ENCODE measurements at regions of chr19 and their contacts with region 1.

Region 1: GRCh38 chr19:41353466-41354342 is at the start of gene TGFB1:
- DNase-seq: peak; percentile 89 to 94 (median 92)
- ATAC-seq: peak; percentile 85
- H3K4me3 ChIP-seq: peak within 1 kb of the TSS; percentile 94
- H3K4me3 Mint-ChIP-seq: peak within 1 kb of the TSS; percentile 92 to 100 (median 98)
- H3K27ac ChIP-seq: peak within 1 kb of the TSS; percentile 96
- H3K27ac Mint-ChIP-seq: peak within 1 kb of the TSS; percentile 94 to 100 (median 98)
- H3K4me1 ChIP-seq: peaks cover 44 to 70% of the 10 kb centered on the region in 2 donors
- H3K4me1 Mint-ChIP-seq: peaks cover 56 to 71% (median 59%) of the 10 kb centered on the region in 7 donors
- H3K27me3 ChIP-seq: no peaks in the 10 kb centered on the region
- H3K27me3 Mint-ChIP-seq: no peaks in the 10 kb centered on the region
- total RNA-seq, gene TGFB1: 91.2 to 322 (median 185) TPM

Region 2: GRCh38 chr19:39833464-39834286 is 1520.0 kb before region 1 on chr19 and contains the start of gene DYRK1B:
- CTCF ChIA-PET with region 1: no interaction called
- POLR2A ChIA-PET with region 1: no interaction called
- intact Hi-C with region 1: loop called in 1 of 2 experiments (anchors 5 kb)
- DNase-seq: peak; percentile 90 to 99 (median 98)
- ATAC-seq: peak; percentile 92
- H3K4me3 ChIP-seq: peak within 1 kb of the TSS; percentile 100
- H3K4me3 Mint-ChIP-seq: peak within 1 kb of the TSS; percentile 60 to 88 (median 81)
- H3K27ac ChIP-seq: peak within 1 kb of the TSS; percentile 96
- H3K27ac Mint-ChIP-seq: peak within 1 kb of the TSS; percentile 85 to 96 (median 92)
- H3K4me1 ChIP-seq: peaks cover 17 to 23% of the 10 kb centered on the region in 2 donors
- H3K4me1 Mint-ChIP-seq: peaks cover 19 to 37% (median 27%) of the 10 kb centered on the region in 7 donors
- H3K27me3 ChIP-seq: no peaks in the 10 kb centered on the region
- H3K27me3 Mint-ChIP-seq: no peaks in the 10 kb centered on the region
- total RNA-seq, gene DYRK1B: 12.3 to 38.9 (median 23.5) TPM

Region 3: GRCh38 chr19:39996811-39997594 is 1356.7 kb before region 1 on chr19 and contains the start of gene ZNF546:
- CTCF ChIA-PET with region 1: no interaction called
- POLR2A ChIA-PET with region 1: no interaction called
- intact Hi-C with region 1: no loop called
- DNase-seq: peak; percentile 67 to 91 (median 90)
- ATAC-seq: peak; percentile 96
- H3K4me3 ChIP-seq: peak within 1 kb of the TSS; percentile 91
- H3K4me3 Mint-ChIP-seq: peak within 1 kb of the TSS; percentile 87 to 100 (median 95)
- H3K27ac ChIP-seq: peak within 1 kb of the TSS; percentile 85
- H3K27ac Mint-ChIP-seq: peak within 1 kb of the TSS; percentile 84 to 100 (median 95)
- H3K4me1 ChIP-seq: peaks cover 10 to 13% of the 10 kb centered on the region in 2 donors
- H3K4me1 Mint-ChIP-seq: peaks cover 20 to 56% (median 41%) of the 10 kb centered on the region in 7 donors
- H3K27me3 ChIP-seq: no peaks in the 10 kb centered on the region
- H3K27me3 Mint-ChIP-seq: no peaks in the 10 kb centered on the region
- total RNA-seq, gene ZNF546: 4.7 to 24.8 (median 7.5) TPM

Region 4: DNA sequence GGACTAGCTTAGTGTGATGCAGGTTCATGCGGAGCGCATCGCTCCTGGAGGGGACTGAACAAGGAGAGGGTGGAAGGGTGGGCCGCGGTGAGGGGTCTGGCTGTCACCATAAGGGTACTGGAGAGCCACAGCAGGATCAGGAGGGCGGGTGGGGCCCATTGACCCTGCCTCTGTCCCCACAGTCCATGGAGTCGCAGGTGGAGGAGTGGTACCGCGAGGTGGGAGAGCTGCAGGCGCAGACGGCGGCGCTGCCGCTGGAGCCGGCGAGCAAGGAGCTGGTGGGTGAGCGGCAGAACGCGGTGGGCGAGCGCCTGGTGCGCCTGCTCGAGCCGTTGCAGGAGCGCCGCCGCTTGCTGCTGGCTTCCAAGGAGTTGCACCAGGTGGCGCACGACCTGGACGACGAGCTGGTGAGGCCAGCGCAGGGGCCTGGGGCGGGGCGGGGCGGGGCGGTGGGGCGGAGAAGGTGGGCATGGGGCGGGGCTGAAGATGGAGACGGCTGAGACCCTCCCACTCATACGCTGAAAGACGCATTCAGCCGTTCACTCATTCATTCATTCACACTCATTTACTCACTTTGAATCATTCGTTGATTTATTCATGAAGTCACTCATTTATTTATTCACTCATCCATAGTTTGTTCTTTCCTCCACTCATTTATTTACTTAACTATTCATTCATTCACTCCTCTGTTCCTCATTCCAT is 804.5 kb before region 1 on chr19:
- CTCF ChIA-PET with region 1: no interaction called
- POLR2A ChIA-PET with region 1: no interaction called
- intact Hi-C with region 1: no loop called
- DNase-seq: peak; percentile 26 to 74 (median 57)
- ATAC-seq: peak; percentile 95
- H3K4me3 ChIP-seq: no peak overlapping the region
- H3K4me3 Mint-ChIP-seq: peak overlapping the region in 8 of 10 donors; percentile 13 to 73 (median 54)
- H3K27ac ChIP-seq: no peak overlapping the region
- H3K27ac Mint-ChIP-seq: no peak overlapping the region
- H3K4me1 ChIP-seq: peaks cover 0 to 5% of the 10 kb centered on the region in 2 donors
- H3K4me1 Mint-ChIP-seq: peaks cover 0 to 14% (median 12%) of the 10 kb centered on the region in 7 donors
- H3K27me3 ChIP-seq: peaks cover 0 to 10% of the 10 kb centered on the region in 2 donors
- H3K27me3 Mint-ChIP-seq: peaks cover 38 to 60% (median 52%) of the 10 kb centered on the region in 5 donors

Region 5: DNA sequence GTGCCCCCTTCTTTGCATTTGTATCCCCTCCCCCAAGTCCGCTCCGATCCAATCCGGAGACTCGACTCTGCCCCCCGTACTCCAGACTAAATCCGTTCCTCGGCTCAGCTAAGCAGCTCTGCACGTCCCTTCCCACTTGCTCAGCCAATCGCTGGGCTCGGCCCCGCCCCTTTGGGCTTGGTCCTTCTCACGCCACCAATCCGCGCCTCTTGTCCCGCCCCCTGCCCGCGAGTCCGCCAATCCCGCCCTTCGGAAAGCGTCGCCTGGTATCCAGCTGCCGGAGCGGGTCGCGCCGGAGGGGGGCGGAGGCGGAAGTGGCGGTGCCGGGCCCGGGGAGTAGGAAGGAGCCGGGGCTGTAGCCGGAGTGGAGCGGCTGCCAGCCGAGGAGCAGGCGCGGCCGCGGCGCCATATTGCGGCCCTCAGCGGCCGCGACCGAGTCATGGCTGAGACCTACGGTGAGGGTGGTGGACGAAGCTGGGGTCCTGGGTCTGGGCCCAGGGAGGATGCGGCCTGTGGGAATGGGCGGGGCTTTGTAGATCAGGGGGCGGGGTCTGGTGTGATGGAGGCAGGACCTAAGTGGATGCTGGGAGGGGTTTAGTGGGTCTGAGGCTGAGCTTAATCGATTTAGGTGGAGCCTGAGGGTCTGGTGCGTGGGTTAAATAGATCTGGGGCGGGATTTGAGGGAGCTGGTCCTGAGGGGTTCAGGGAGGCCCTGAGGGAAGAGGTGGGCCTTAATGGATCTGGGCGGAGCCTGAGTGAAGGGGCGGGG is 575.6 kb before region 1 on chr19 and contains the start of gene RAB4B:
- CTCF ChIA-PET with region 1: interaction called, 4 read pairs
- POLR2A ChIA-PET with region 1: no interaction called
- intact Hi-C with region 1: loop called in 1 of 2 experiments (anchors 10 kb)
- DNase-seq: peak; percentile 99 to 100 (median 100)
- ATAC-seq: peak; percentile 92
- H3K4me3 ChIP-seq: peak within 1 kb of the TSS; percentile 97
- H3K4me3 Mint-ChIP-seq: peak within 1 kb of the TSS; percentile 91 to 99 (median 96)
- H3K27ac ChIP-seq: peak within 1 kb of the TSS; percentile 92
- H3K27ac Mint-ChIP-seq: peak within 1 kb of the TSS; percentile 87 to 99 (median 98)
- H3K4me1 ChIP-seq: peaks cover 18 to 24% of the 10 kb centered on the region in 2 donors
- H3K4me1 Mint-ChIP-seq: peaks cover 31 to 49% (median 39%) of the 10 kb centered on the region in 7 donors
- H3K27me3 ChIP-seq: no peaks in the 10 kb centered on the region
- H3K27me3 Mint-ChIP-seq: no peaks in the 10 kb centered on the region
- total RNA-seq, gene RAB4B: 37.6 to 63.0 (median 52.5) TPM

Region 6: DNA sequence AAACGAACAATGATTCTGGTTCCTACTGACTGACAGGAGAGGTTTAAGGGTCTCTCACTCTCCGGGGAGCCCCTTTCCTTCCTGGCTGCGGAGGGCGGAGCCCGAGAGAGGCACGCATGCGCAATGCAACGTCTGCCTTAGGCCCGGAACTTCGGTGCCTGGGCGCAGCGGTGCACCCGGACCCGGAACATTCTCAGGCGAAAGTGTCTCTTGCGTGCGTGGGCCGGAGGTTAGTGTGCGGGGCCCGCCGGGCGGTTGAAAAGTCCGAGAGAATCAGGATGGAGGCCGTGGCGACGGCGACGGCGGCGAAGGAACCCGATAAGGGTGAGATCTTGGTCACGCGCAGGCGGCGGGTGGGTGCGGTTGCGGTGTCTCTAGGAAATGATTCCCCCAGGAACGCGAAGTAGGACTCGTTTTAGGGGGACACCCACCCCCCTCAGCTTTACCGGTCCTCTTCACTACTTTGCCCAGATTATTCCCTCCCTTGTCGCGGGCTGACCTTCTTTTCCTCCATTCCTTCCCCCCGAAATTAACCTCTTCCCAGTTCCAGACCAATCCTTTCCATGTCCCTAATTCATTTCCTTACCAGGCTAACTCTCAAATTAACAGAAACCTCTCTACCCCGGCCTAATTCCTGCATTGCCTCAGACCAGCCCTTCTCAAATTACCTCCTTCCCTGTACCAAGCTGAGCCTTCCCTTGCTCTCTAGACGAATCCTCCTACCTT is 43.5 kb before region 1 on chr19 and contains the start of gene CCDC97:
- CTCF ChIA-PET with region 1: interaction called, 21 read pairs
- POLR2A ChIA-PET with region 1: interaction called, 110 read pairs
- intact Hi-C with region 1: loop called (anchors 1 kb)
- DNase-seq: peak; percentile 85 to 94 (median 91)
- ATAC-seq: peak; percentile 72
- H3K4me3 ChIP-seq: peak within 1 kb of the TSS; percentile 72
- H3K4me3 Mint-ChIP-seq: peak within 1 kb of the TSS; percentile 93 to 100 (median 96)
- H3K27ac ChIP-seq: peak within 1 kb of the TSS; percentile 87
- H3K27ac Mint-ChIP-seq: peak within 1 kb of the TSS; percentile 94 to 99 (median 98)
- H3K4me1 ChIP-seq: peaks cover 51 to 60% of the 10 kb centered on the region in 2 donors
- H3K4me1 Mint-ChIP-seq: peaks cover 52 to 90% (median 69%) of the 10 kb centered on the region in 7 donors
- H3K27me3 ChIP-seq: no peaks in the 10 kb centered on the region
- H3K27me3 Mint-ChIP-seq: peaks cover 0 to 3% (median 0%) of the 10 kb centered on the region in 5 donors
- total RNA-seq, gene CCDC97: 35.9 to 56.5 (median 49.1) TPM

Region 7: GRCh38 chr19:41363753-41364523 is 10.2 kb after region 1 on chr19 and contains the start of gene B9D2:
- CTCF ChIA-PET with region 1: interaction called, 39 read pairs
- POLR2A ChIA-PET with region 1: interaction called, 127 read pairs
- intact Hi-C with region 1: loop called (anchors 1 kb)
- DNase-seq: peak; percentile 91 to 99 (median 98)
- ATAC-seq: peak; percentile 96
- H3K4me3 ChIP-seq: peak within 1 kb of the TSS; percentile 98
- H3K4me3 Mint-ChIP-seq: peak within 1 kb of the TSS; percentile 82 to 100 (median 98)
- H3K27ac ChIP-seq: peak within 1 kb of the TSS; percentile 99
- H3K27ac Mint-ChIP-seq: peak within 1 kb of the TSS; percentile 96 to 100 (median 99)
- H3K4me1 ChIP-seq: peaks cover 15 to 21% of the 10 kb centered on the region in 2 donors
- H3K4me1 Mint-ChIP-seq: peaks cover 14 to 51% (median 41%) of the 10 kb centered on the region in 7 donors
- H3K27me3 ChIP-seq: no peaks in the 10 kb centered on the region
- H3K27me3 Mint-ChIP-seq: no peaks in the 10 kb centered on the region
- total RNA-seq, gene B9D2: 11.6 to 38.9 (median 12.5) TPM

Region 8: DNA sequence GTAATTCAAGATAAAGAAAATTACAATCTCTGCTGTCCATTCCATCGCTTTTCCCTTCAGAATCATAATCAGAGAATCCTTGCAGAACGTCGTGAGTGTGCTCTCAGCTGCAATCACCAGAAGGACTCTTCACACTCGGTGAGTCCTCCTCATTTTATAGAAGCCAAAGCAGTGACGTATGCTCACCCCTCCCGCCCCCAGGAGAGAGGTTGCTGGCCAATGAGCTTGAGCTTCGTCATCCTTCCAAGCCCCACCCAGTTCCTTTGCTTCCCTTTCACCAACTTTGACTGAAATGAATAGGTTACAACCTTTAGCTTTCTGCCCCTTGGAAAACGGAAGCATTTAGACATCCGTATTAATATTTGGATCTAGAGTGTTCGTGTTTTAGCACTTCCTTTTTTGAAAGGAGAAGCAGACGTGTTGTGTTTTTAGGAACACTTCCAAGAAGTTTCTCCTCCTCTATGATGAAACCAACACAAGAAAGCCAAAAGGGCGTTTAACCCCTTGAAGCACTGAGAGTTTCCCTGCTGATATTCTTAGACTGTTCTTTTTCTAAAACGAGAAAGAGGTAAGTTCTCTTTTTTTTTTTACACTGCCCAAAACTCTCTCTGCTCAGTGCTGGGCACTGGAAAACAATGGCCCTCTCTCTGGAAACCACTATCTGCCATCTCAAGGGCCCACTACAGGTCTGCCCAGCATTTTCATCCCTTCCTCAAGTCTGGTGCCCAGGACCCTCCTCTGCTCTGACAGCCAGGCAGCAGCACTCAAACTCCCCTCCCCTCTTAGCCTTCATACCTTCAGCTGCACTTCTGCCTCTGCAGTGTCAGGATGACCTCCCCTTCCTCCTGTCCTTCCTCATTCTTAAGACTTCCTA is 178.0 kb after region 1 on chr19:
- CTCF ChIA-PET with region 1: no interaction called
- POLR2A ChIA-PET with region 1: no interaction called
- intact Hi-C with region 1: loop called in 1 of 2 experiments (anchors 1 kb)
- DNase-seq: peak; percentile 59 to 95 (median 93)
- ATAC-seq: peak; percentile 95
- H3K4me3 ChIP-seq: peak overlapping the region; percentile 46
- H3K4me3 Mint-ChIP-seq: peak overlapping the region; percentile 77 to 98 (median 84)
- H3K27ac ChIP-seq: peak overlapping the region; percentile 75
- H3K27ac Mint-ChIP-seq: peak overlapping the region; percentile 83 to 98 (median 92)
- H3K4me1 ChIP-seq: peaks cover 32 to 46% of the 10 kb centered on the region in 2 donors
- H3K4me1 Mint-ChIP-seq: peaks cover 50 to 70% (median 64%) of the 10 kb centered on the region in 7 donors
- H3K27me3 ChIP-seq: no peaks in the 10 kb centered on the region
- H3K27me3 Mint-ChIP-seq: peaks cover 0 to 7% (median 0%) of the 10 kb centered on the region in 5 donors

Region 9: GRCh38 chr19:41597600-41598041 is 243.9 kb after region 1 on chr19:
- CTCF ChIA-PET with region 1: no interaction called
- POLR2A ChIA-PET with region 1: no interaction called
- intact Hi-C with region 1: no loop called
- DNase-seq: peak; percentile 35 to 77 (median 69)
- ATAC-seq: peak; percentile 93
- H3K4me3 ChIP-seq: no peak overlapping the region
- H3K4me3 Mint-ChIP-seq: peak overlapping the region in 3 of 10 donors; percentile 10 to 78 (median 19)
- H3K27ac ChIP-seq: no peak overlapping the region
- H3K27ac Mint-ChIP-seq: peak overlapping the region in 1 of 9 donors; percentile 17
- H3K4me1 ChIP-seq: no peaks in the 10 kb centered on the region
- H3K4me1 Mint-ChIP-seq: peaks cover 9 to 17% (median 12%) of the 10 kb centered on the region in 7 donors
- H3K27me3 ChIP-seq: no peaks in the 10 kb centered on the region
- H3K27me3 Mint-ChIP-seq: peaks cover 0 to 38% (median 9%) of the 10 kb centered on the region in 5 donors

Measured in naive thymus-derived CD4-positive, alpha-beta T cell (primary cell).